ENCODE measurements at regions of chr5 and their contacts with region 1.

Region 1: GRCh38 chr5:143177263-143177983 is 226.1 kb downstream of the NR3C1 start:
- DNase-seq: peak; percentile 95
- ATAC-seq: peak; percentile 98
- H3K4me3 ChIP-seq: no peak overlapping the region
- H3K27ac ChIP-seq: peak overlapping the region; percentile 83
- H3K4me1 ChIP-seq: peaks cover 22% of the 10 kb centered on the region
- H3K27me3 ChIP-seq: no peaks in the 10 kb centered on the region
- CTCF ChIP-seq: no peak

Region 2: DNA sequence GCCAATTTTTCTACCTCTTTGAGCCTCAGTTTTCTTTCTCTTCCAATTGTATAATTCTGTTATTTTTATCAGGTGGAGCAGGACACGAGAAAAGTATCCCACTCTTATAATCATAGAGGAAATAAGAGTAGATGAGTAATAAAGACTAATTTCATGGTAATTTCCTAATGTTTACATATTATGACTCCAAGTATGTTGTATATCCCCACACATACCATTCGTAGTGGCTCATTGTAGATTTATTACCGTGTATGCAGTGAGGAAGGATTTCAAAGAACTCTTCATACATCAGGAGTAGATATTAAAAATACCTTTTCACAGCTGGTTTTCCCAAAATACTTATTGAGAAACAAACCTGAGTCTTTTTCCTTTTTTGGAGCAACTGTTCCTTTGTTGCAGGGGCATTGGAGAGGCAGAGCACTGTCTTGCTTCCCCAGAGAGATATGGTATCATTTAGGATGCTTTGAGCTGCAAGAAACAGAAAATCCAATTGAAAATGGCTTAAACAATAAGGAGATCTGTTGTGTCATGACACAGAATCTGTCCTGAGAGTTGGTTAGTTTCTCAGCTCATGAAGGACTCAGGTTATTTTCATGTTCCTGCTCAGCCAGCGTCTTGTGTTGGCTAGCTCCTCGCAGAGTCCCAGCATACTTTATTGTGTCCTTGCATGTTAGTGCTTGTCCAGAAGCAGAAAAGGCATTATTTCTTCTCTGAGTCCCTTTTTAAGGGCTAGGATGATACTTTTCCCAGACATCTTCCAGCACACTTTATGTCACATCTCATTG is 116.1 kb before region 1 on chr5:
- CTCF ChIA-PET with region 1: no interaction called
- POLR2A ChIA-PET with region 1: no interaction called
- intact Hi-C with region 1: loop called (anchors 1 kb)
- DNase-seq: peak; percentile 84
- ATAC-seq: peak; percentile 82
- H3K4me3 ChIP-seq: peak overlapping the region; percentile 27; the same call in 1 of the 2 replicates
- H3K27ac ChIP-seq: peak overlapping the region; percentile 92
- H3K4me1 ChIP-seq: peaks cover 58% of the 10 kb centered on the region
- H3K27me3 ChIP-seq: no peaks in the 10 kb centered on the region
- CTCF ChIP-seq: no peak

Region 3: DNA sequence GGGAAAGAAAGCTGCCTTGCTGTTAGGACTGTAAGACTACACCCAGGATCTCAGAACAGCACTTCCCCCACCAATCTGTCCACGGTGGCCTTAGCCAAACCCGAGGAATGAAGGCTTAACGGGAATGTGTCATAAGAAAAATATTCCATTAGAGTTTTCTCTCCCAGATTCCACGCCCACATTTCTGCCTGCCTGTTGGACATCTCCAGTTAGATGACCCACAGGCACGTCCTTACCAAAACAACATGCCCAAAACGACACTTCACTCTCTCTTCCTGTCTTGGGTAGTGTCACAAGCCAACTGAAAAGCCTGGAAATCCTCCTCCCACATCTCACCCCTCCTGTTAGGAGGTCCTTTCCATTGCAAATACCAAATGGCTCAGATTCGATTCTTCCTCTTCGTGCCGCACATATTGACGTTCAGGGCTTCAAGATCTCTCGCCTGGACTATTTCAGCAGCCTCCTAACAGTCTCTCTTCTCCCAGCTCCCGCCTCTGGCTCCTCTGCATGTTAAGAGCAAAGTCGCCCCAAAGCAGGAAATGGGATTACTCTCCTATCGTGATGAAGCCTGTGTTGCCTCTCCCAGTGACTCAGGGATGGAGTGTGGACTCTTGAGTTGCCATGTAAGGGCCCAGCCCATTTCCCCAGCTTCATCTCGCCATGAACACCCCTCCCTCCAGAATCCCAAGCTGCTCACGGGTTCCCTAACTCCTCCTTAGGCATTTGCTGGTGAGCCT is 66.7 kb after region 1 on chr5:
- CTCF ChIA-PET with region 1: no interaction called
- POLR2A ChIA-PET with region 1: no interaction called
- intact Hi-C with region 1: loop called (anchors 2 kb)
- DNase-seq: peak; percentile 95
- ATAC-seq: peak; percentile 78
- H3K4me3 ChIP-seq: peak overlapping the region; percentile 52
- H3K27ac ChIP-seq: peak overlapping the region; percentile 99
- H3K4me1 ChIP-seq: peaks cover 58% of the 10 kb centered on the region
- H3K27me3 ChIP-seq: no peaks in the 10 kb centered on the region
- CTCF ChIP-seq: no peak